Activated T-helper 1 cell treated with anti-CD3 and anti-CD28 coated beads, Interleukin-12 subunit alpha, Interleukin-12 subunit beta, Interleukin-2, Interleukin-4 antibody, amounts not matched to agents 30 ng/mL and 10 ng/mL and 1 ng/mL, durations not matched to agents 14 hours and 24 hours and 36 hours (primary cell): ENCODE measurements at regions of chr21 and their contacts with region 1.

Region 1: DNA sequence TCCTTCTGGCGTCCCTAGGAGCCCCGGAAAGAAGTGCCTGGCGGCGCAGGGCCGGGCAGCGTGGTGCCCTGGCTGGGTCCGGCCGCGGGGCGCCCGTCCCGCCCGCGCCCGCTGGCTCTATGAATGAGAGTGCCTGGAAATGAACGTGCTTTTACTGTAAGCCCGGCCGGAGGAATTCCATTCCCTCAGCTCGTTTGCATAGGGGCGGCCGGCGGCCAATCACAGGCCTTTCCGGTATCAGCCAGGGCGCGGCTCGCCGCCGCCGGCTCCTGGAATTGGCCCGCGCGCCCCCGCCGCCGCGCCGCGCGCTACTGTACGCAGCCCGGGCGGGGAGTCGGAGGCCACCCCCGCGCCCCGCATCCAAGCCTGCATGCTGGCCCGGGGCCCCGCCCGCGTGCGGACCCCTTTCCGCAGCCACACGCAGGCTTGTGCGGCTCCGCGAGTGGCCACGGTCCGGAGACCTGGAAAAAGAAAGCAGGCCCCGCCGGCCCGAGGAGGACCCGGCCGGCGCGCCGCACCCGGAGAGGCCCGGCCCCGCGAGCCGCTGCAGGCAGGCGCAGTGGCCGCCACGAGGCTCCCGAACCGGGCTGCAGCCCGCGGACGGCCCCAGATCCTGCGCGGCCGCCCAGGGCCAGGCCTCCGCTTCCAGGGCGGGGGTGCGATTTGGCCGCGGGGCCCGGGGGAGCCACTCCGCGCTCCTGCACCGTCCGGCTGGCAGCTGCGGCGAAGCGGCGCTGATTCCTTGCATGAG is 160.4 kb downstream of the RUNX1 start:
- DNase-seq: peak; percentile 80
- H3K4me3 Mint-ChIP-seq: peak overlapping the region; percentile 93
- H3K27ac Mint-ChIP-seq: peak overlapping the region; percentile 99
- H3K4me1 Mint-ChIP-seq: peaks cover 54% of the 10 kb centered on the region
- H3K27me3 Mint-ChIP-seq: peaks cover 3% of the 10 kb centered on the region

Region 2: DNA sequence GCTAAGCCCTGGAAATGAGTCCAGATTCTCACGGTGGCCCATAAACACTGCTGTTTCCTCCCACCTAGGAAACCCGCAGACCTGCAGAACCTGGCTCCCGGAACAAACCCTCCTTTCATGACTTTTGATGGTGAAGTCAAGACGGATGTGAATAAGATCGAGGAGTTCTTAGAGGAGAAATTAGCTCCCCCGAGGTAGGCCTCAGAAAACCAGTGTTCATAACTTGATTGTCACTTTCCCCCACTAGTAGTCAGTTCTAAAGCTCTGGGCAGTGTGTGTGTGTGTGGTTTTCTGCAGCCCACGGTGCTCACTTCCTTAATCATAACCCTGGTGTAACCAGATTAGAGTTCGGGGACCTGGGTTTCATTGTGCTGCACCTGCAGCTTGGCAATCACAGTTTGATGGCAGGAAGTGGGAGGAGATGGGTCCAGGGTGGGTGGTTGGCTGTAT is 180.8 kb before region 1 on chr21:
- intact Hi-C with region 1: loop called (anchors 2 kb)
- DNase-seq: peak; percentile 28
- H3K4me3 Mint-ChIP-seq: peak overlapping the region; percentile 48
- H3K27ac Mint-ChIP-seq: no peak overlapping the region
- H3K4me1 Mint-ChIP-seq: peaks cover 24% of the 10 kb centered on the region
- H3K27me3 Mint-ChIP-seq: peaks cover 16% of the 10 kb centered on the region

Region 3: GRCh38 chr21:34933609-34934335 is 45.0 kb after region 1 on chr21:
- intact Hi-C with region 1: loop called (anchors 2 kb)
- DNase-seq: peak; percentile 37
- H3K4me3 Mint-ChIP-seq: peak overlapping the region; percentile 75
- H3K27ac Mint-ChIP-seq: peak overlapping the region; percentile 95
- H3K4me1 Mint-ChIP-seq: peaks cover 86% of the 10 kb centered on the region
- H3K27me3 Mint-ChIP-seq: no peaks in the 10 kb centered on the region

Region 4: DNA sequence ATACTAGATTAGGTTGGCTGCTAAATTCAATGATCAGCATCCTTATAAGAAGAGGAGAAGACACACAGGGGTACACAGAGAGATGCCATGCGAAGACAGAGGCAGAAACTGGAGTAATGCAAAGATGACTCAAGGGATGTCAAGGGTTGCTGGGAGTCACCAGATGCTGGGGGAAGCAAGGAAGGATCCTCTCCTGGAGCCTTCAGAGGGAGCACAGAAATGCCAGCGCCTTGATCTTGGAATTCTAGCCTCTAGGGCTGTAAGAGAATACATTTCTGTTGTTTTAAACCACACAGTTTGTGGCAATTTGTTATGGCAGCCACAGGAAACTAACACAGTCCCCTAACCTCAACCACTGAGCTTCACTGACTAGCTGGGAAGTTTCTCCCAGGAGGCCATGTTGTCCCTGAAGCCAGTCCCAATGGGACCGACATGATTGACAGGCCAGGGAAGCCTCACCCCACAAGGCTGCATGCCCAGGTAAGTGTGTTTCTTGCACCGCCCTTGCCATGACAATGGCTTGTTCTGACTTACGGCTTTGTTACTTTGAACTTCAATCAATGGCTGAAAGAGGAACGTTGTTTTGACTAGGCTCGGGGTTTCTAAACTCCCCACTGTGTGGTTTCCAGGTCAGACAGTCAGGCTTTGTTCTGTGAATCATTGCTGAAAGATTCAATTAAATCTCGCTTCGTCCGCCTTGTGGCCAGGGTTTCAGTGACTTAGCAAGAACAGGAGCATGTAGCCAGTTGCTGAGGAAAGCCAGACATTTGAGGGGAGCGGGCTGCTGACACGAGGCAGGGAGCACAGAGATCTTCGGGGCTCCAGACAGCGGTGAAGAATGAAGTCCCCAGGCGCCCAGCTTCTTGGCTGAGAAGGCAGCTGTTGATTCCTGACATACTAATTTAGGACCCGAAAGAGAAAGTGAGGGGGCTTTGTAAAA is 98.1 kb after region 1 on chr21:
- intact Hi-C with region 1: loop called (anchors 1 kb)
- DNase-seq: peak; percentile 70
- H3K4me3 Mint-ChIP-seq: peak overlapping the region; percentile 62
- H3K27ac Mint-ChIP-seq: peak overlapping the region; percentile 97
- H3K4me1 Mint-ChIP-seq: peaks cover 92% of the 10 kb centered on the region
- H3K27me3 Mint-ChIP-seq: no peaks in the 10 kb centered on the region

Region 5: DNA sequence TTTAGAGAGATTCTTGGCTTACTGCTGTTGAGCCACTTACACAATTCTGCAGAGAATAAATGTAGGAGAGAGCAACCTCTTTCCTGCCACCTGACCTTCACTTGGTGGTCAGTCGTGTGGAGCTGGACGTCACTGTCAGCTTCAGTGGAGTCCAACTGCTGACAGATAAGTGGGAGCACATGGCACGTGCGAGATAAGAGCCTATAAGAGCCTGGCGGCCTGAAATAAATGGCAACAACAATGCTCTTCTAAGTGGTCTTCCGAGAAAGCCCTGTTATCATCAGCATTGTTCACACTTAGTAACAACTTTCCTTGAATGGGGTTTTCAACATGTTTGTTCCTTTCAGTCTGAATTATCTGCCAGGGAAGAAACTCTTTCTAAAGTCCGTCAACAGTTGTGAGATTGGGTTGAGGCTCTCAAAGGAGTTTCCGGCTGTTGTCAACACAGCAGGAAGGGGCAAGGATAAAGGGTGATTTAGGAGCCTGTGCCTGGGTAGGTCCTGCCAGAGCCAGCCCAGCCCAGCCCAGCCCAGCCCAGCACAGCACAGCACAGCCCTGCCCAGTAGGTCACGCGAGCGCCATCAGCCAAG is 217.6 kb after region 1 on chr21:
- intact Hi-C with region 1: no loop called
- DNase-seq: no peak
- H3K4me3 Mint-ChIP-seq: no peak overlapping the region
- H3K27ac Mint-ChIP-seq: no peak overlapping the region
- H3K4me1 Mint-ChIP-seq: no peaks in the 10 kb centered on the region
- H3K27me3 Mint-ChIP-seq: no peaks in the 10 kb centered on the region

Region 6: GRCh38 chr21:35138665-35139381 is 250.1 kb after region 1 on chr21:
- intact Hi-C with region 1: loop called (anchors 1 kb)
- DNase-seq: no peak
- H3K4me3 Mint-ChIP-seq: peak overlapping the region; percentile 62
- H3K27ac Mint-ChIP-seq: peak overlapping the region; percentile 93
- H3K4me1 Mint-ChIP-seq: peaks cover 27% of the 10 kb centered on the region
- H3K27me3 Mint-ChIP-seq: no peaks in the 10 kb centered on the region

Region 7: DNA sequence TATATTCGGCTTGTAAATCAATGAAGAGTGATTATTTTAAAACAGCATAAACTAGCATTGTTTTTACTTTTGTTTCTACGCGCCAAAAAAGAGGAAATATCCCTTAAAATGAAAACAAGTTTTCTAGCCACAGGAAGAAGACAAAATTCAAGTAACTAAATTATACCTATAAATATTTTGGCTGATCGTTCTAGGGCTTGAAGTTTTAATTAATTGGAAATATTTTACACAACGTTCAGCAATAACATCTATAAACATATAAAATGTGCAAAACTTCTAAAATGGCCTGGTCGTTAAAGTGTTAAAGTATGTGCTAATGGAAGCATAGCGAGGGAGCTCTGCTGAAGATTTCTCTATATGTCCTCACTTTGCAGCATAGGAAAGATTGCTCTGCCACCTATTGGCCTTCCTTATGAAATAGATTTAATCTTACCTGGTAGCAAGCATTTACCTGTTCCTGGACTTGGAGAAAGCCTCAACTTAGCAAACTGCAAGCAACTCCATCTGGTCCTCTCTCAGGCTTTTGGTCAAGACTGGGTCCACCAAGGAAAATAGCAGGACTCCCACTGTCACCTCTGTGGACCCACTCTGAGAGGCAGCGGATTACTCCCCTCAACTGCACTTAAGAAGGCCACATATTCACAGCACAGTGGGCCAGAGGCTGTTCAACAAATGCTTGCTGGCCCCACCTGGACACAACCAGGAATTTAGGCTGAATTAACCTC is 511.7 kb after region 1 on chr21:
- intact Hi-C with region 1: loop called (anchors 1 kb)
- DNase-seq: peak; percentile 9
- H3K4me3 Mint-ChIP-seq: no peak overlapping the region
- H3K27ac Mint-ChIP-seq: no peak overlapping the region
- H3K4me1 Mint-ChIP-seq: peaks cover 23% of the 10 kb centered on the region
- H3K27me3 Mint-ChIP-seq: no peaks in the 10 kb centered on the region